A673 (cell line): ENCODE measurements at regions of chr5 and their contacts with region 1.

Region 1: GRCh38 chr5:100424017-100424416 is 111.2 kb upstream of the FAM174A start:
- DNase-seq: no peak
- H3K4me3 ChIP-seq: no peak overlapping the region
- H3K27ac ChIP-seq: no peak overlapping the region
- H3K4me1 ChIP-seq: no peaks in the 10 kb centered on the region
- H3K27me3 ChIP-seq: no peaks in the 10 kb centered on the region
- CTCF ChIP-seq: no peak

Region 2: GRCh38 chr5:101045689-101046088 is 621.7 kb after region 1 on chr5:
- CTCF ChIA-PET with region 1: no interaction called
- POLR2A ChIA-PET with region 1: no interaction called
- intact Hi-C with region 1: loop called (anchors 10 kb)
- DNase-seq: peak; percentile 2
- H3K4me3 ChIP-seq: no peak overlapping the region
- H3K27ac ChIP-seq: no peak overlapping the region
- H3K4me1 ChIP-seq: no peaks in the 10 kb centered on the region
- H3K27me3 ChIP-seq: no peaks in the 10 kb centered on the region
- CTCF ChIP-seq: peak; percentile 29; the same call in 1 of the 2 replicates